ENCODE measurements at regions of chr12 and their contacts with region 1.

Region 1: GRCh38 chr12:19095756-19096480 is 33.6 kb upstream of the PLEKHA5 start:
- DNase-seq: no peak
- H3K4me3 Mint-ChIP-seq: no peak overlapping the region
- H3K27ac Mint-ChIP-seq: no peak overlapping the region
- H3K4me1 Mint-ChIP-seq: no peaks in the 10 kb centered on the region
- H3K27me3 Mint-ChIP-seq: no peaks in the 10 kb centered on the region

Region 2: DNA sequence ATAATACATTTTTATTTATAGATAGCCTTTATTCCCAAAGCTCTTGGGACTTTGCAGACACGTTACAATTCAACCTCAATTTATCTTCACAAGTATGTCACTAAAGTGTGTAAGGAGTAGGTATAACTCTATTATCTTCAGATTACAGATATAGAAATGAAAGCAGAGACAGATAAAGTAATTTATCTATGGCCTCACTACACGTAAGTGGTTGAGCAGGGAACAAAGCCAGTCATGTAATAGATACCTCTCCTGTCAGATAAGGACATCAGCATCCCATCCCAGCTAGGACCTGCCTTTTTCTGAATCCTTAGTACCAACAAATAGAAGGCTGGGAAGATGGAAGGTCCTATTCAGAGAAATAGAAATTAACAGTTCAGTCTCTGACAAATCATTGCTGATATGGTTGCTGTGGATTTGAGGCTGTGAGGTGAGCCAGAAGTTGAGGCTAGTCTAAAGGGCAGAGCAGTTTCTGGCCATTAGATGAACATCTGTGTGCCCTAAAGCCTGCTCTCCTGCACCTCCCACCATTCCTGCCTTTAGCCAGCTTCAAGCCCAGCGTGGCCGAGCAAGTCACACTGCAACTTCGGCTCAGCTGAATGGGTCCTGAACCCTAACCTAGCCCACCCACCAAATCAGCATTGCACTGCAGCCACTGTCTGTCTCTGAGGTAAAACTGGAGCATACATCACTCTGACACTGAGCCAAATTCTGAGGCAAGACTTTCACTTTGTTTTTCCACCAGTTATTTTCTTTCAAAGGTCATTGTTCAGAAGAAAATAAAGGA is 37.5 kb before region 1 on chr12:
- CTCF ChIA-PET with region 1: no interaction called
- POLR2A ChIA-PET with region 1: no interaction called
- DNase-seq: no peak
- H3K4me3 Mint-ChIP-seq: no peak overlapping the region
- H3K27ac Mint-ChIP-seq: no peak overlapping the region
- H3K4me1 Mint-ChIP-seq: no peaks in the 10 kb centered on the region
- H3K27me3 Mint-ChIP-seq: no peaks in the 10 kb centered on the region

Region 3: DNA sequence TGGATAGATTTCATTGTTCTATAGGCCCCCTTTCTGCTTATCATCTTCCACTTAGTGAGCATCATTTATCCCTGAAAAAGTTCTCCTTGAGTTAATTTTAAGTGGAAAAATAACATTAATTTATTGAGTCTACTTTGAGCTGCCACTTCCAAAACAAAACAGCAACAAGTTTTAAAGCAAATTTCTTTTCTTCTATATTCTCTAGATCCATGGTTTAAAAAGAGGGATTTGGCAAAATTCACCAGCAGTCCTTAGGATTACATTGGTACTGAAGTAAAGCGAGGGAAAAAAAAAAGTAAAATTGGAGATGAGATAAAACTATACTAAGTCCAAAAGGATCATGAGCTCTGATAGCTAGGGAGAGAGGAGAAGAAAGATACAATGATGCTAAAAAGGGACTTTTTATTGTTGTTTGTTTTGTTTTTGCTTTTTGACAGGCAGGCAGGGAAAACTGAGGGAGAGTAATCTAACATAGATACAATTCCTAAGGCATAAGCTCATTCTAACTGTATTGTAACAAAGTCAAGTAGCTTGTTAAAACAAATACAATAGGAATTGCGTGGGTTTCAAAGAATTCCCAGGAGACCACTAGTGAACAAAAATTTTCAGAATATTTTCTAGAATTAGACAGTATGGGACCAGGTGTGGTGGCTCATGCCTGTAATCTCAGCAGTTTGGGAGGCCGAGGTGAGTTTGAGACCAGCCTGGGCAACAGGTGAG is 14.5 kb after region 1 on chr12:
- CTCF ChIA-PET with region 1: no interaction called
- POLR2A ChIA-PET with region 1: interaction called, 10 read pairs
- DNase-seq: no peak
- H3K4me3 Mint-ChIP-seq: no peak overlapping the region
- H3K27ac Mint-ChIP-seq: no peak overlapping the region
- H3K4me1 Mint-ChIP-seq: no peaks in the 10 kb centered on the region
- H3K27me3 Mint-ChIP-seq: peaks cover 3% of the 10 kb centered on the region